ENCODE measurements at regions of chr15 and their contacts with region 1.

Region 1: DNA sequence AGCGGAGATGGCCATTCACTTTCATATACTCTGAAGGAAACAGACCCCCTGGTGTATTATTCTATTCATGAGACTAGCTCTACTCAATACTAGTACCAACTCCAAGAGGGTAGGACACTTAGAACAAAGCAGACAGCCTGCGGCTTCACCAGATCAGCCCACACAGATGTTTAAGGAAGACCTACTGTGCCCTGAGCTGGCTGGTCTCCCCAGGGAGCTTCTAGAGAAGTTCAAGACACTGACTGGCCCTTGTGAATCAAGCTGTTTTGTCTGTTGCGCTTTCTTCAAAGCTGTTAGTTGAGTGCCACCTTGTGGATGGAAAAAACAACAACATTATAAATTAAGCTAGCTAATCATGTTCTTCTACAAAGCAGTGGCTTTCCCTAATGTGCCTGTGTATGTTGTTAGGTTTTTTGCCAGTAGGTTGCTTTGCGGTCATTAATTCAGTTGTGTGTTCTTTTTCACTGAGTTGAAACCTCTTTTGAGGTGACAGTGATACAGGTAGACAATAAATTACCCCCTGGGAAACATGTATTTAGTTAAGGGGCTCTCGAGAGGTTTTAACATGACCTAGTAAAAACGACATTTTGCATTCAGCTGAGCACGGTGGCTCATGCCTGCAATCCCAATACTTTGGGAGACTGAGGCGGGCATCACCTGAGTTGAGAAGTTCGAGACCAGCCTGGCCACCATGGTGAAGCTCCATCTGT is 64.2 kb upstream of the MYZAP start:
- DNase-seq: peak; percentile 58
- CTCF ChIP-seq: peak; percentile 43

Region 2: DNA sequence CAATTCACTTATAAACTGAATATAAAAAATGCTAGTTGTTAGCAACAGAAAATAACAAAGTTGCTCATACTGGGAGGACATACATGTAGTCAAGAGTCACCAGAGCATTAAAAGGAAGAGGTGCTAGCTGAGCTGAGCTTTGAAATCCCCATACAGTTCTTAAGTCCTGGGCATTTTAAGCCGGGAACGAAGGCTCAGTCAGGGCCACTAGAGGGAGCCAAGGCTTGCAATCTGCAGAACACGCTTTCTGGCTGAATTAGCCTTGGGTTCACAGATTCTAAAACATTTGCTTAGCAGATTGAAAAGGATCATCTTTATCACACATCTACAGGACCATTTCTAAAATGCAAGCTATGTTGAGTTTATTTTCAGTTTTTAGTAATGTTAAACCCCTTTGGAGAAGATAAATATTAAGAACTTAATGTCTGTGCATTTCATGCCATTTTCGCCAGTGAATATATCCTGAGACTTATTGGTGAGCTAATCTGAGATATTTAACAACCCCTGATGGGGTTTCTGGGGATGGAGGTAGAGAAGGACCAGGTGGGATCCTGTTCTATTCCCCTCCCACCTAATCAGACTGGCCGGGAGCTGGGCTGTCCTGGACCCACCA is 1036.3 kb before region 1 on chr15:
- CTCF ChIA-PET with region 1: interaction called, 13 read pairs
- POLR2A ChIA-PET with region 1: no interaction called
- DNase-seq: peak; percentile 73
- CTCF ChIP-seq: peak; percentile 93

Region 3: DNA sequence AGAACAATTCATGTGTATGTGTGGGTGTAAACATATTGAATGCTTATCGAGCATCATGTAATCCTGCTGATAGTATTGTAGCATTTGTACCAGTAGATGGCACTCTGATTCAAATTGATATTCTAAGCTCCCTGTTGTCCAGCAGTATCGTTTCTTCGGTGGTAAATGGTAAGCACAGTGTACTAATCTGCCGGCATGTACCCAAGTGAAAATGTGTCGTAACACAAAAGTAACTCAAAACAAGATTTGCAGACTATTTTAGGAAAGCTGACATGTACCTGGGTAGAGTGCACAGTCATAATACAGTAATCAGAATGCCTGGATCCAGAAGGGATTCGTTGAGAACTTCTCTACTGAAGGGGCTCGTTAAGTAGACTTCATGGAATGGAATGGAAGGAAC is 1030.9 kb before region 1 on chr15:
- CTCF ChIA-PET with region 1: interaction called, 13 read pairs
- POLR2A ChIA-PET with region 1: no interaction called
- DNase-seq: peak; percentile 63
- CTCF ChIP-seq: peak; percentile 70

Region 4: DNA sequence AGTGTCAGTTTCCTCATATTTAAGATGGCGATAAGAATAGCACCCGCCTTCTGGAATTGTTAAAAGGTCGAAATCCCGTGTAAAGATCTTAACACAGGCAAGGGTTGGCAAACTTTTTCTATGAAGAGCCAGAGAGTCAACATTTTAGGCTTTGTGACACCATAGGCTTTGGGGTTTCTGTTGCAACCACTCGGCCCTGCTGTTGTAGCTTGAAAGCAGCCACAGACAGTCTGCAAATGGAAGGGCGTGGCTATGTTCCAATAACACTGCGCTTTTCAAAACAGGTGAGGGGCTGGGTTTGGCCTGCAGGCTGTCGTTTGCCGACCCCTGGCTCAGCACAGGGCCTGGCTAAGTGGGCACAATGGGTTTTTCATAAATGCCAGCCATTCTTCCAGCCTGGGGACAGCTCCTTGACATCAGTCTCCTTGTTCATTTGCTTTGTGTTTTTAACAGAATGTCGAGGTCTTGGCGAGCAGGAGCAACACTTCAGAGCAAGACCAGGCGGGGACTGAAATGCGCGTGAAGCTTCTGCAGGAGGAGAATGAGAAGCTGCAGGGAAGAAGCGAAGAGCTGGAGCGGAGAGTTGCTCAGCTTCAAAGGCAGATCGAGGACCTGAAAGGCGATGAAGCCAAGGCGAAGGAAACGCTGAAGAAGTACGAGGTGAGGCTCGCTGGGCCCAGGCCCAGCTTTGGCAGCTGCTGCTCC is 11.1 kb before region 1 on chr15:
- CTCF ChIA-PET with region 1: interaction called, 15 read pairs
- POLR2A ChIA-PET with region 1: no interaction called
- DNase-seq: no peak
- CTCF ChIP-seq: no peak

Region 5: DNA sequence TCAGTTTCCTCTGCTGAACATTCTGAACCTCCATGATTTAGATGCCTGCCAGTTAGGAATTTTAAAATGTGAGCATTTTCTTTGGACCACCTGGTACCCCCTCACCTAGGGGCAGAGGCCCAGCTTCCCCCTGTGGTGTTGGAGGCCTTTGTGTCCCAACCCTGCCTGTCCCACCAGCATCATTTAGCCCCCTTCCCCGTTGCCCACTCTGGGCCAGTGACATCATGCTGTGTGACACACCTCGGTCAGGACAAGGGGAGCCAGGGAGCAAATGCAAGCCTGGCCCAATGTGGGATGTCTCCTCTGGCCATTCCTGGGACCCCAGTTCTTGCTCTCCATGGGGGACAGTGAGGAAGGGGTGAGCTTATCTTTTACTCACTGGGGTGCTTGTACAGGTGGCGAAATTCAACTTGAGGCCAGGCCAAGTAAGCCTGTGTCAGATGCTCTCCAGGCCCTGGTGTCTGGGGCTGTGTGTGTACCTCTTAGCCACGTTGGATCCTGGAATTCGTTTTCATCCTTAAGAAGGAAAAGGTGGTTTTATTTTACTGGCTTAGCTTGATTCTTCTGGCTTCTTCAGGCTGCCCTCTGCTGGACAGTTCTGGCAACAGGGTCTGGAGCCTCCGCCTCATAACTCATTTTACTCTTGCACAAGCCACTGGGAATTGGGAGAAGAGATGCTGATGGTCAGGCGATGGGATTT is 14.4 kb after region 1 on chr15:
- CTCF ChIA-PET with region 1: interaction called, 65 read pairs
- POLR2A ChIA-PET with region 1: no interaction called
- DNase-seq: peak; percentile 53
- CTCF ChIP-seq: peak; percentile 76